ENCODE measurements at regions of chr3 and their contacts with region 1.

Region 1: GRCh38 chr3:140941434-140942220 is at the start of gene SLC25A36:
- DNase-seq: peak; percentile 98
- H3K4me3 Mint-ChIP-seq: peak within 1 kb of the TSS; percentile 92
- H3K27ac Mint-ChIP-seq: peak within 1 kb of the TSS; percentile 83
- H3K4me1 Mint-ChIP-seq: peaks cover 37% of the 10 kb centered on the region
- H3K27me3 Mint-ChIP-seq: no peaks in the 10 kb centered on the region
- total RNA-seq, gene SLC25A36: 44.7 to 56.5 TPM

Region 2: DNA sequence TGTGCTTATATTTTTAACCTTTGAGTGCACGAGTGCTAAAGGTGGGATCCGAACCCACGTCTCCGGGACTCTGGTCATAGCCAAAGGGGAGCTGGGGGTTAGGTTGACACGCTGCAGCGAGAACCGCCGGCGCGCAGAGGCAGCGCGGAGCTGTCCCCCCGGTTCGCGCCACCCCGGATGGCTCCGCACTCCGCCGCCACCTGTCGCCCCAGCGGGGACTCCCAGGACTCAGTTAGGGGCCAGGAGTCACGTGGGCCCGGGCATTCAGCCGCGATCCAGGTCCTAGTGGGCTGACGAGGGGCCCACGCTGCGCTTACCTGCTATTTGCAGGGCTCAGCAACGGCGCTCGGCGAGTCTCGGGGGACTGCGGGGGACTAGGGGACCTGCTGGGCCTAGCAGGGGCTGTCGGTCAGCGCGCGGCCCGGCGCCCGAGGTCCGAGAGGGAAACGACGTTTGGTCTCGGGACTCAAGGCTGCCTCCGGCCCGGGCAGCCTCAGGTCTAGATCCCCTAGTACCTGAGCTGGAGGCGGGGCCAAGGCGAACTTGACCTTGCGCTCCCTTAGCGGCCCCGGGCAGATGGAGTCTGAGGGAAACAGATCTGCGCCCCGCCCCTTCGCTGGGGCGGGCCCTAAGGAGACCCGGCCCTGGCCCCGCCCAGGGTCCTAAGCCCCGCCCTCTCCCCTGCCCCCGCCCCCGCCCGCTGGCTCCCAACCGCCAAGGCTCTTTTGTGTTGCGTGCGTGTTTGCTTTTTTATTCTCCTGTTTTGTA is 1264.1 kb before region 1 on chr3 and contains the start of gene NMNAT3:
- CTCF ChIA-PET with region 1: no interaction called
- POLR2A ChIA-PET with region 1: no interaction called
- intact Hi-C with region 1: loop called (anchors 5 kb)
- DNase-seq: peak; percentile 86
- H3K4me3 Mint-ChIP-seq: peak within 1 kb of the TSS; percentile 76
- H3K27ac Mint-ChIP-seq: no peak within 1 kb of the TSS
- H3K4me1 Mint-ChIP-seq: peaks cover 7% of the 10 kb centered on the region
- H3K27me3 Mint-ChIP-seq: peaks cover 13% of the 10 kb centered on the region
- total RNA-seq, gene NMNAT3: 1.1 to 2.3 TPM

Region 3: GRCh38 chr3:140953028-140953960 is 11.7 kb after region 1 on chr3:
- CTCF ChIA-PET with region 1: no interaction called
- POLR2A ChIA-PET with region 1: interaction called, 5 read pairs
- intact Hi-C with region 1: loop called (anchors 1 kb)
- DNase-seq: no peak
- H3K4me3 Mint-ChIP-seq: no peak overlapping the region
- H3K27ac Mint-ChIP-seq: no peak overlapping the region
- H3K4me1 Mint-ChIP-seq: peaks cover 41% of the 10 kb centered on the region
- H3K27me3 Mint-ChIP-seq: no peaks in the 10 kb centered on the region

Measured in activated CD4-positive, alpha-beta memory T cell treated with anti-CD3 and anti-CD28 coated beads for 36 hours (primary cell).